ENCODE measurements at regions of chr11 and their contacts with region 1.

Region 1: DNA sequence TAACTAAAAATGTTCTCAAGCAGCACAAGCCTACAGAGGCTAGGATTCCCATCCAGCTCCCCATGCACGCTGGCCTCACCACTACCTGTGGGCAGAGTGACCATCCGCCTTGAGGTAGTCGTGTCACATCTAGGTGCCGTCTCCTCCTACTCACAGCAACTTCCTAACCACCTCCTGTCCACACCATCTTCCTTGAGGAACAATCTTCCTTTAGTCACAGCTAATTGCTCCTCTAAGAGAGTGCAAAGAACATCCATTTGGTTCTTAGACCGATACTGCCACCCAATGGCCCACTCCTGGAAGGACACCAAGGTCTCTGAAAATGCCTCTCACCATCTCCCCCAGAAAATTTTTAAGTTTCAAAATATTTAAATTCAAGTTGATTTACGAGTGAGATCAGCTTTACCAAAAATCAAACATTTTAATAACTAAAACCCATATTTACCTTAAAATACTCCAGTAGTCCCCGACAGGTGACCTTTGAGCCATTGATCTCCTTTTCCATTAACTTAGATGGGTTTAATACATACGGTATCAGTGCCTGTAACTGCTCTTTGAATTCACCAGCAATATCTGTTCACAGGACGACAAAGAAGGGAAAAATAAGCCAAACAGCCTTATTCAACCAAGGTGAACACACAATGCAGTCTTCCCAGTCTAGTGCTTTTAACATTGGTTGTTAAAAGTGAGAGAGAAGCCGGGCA is 21.7 kb upstream of the PLAAT3 start:
- DNase-seq: peak; percentile 66
- H3K4me3 Mint-ChIP-seq: no peak overlapping the region
- H3K27ac Mint-ChIP-seq: no peak overlapping the region
- H3K4me1 Mint-ChIP-seq: peaks cover 6% of the 10 kb centered on the region
- H3K27me3 Mint-ChIP-seq: no peaks in the 10 kb centered on the region
- CTCF ChIP-seq: peak; percentile 71

Region 2: GRCh38 chr11:63592975-63593395 is 42.9 kb before region 1 on chr11:
- CTCF ChIA-PET with region 1: interaction called, 4 read pairs
- POLR2A ChIA-PET with region 1: no interaction called
- intact Hi-C with region 1: loop called (anchors 1 kb)
- DNase-seq: peak; percentile 28
- H3K4me3 Mint-ChIP-seq: no peak overlapping the region
- H3K27ac Mint-ChIP-seq: no peak overlapping the region
- H3K4me1 Mint-ChIP-seq: peaks cover 4% of the 10 kb centered on the region
- H3K27me3 Mint-ChIP-seq: no peaks in the 10 kb centered on the region
- CTCF ChIP-seq: peak; percentile 52

Region 3: GRCh38 chr11:63621931-63622782 is 13.8 kb before region 1 on chr11:
- CTCF ChIA-PET with region 1: interaction called, 16 read pairs
- POLR2A ChIA-PET with region 1: interaction called, 4 read pairs
- intact Hi-C with region 1: no loop called
- DNase-seq: peak; percentile 26
- H3K4me3 Mint-ChIP-seq: no peak overlapping the region
- H3K27ac Mint-ChIP-seq: no peak overlapping the region
- H3K4me1 Mint-ChIP-seq: peaks cover 16% of the 10 kb centered on the region
- H3K27me3 Mint-ChIP-seq: no peaks in the 10 kb centered on the region
- CTCF ChIP-seq: no peak

Region 4: DNA sequence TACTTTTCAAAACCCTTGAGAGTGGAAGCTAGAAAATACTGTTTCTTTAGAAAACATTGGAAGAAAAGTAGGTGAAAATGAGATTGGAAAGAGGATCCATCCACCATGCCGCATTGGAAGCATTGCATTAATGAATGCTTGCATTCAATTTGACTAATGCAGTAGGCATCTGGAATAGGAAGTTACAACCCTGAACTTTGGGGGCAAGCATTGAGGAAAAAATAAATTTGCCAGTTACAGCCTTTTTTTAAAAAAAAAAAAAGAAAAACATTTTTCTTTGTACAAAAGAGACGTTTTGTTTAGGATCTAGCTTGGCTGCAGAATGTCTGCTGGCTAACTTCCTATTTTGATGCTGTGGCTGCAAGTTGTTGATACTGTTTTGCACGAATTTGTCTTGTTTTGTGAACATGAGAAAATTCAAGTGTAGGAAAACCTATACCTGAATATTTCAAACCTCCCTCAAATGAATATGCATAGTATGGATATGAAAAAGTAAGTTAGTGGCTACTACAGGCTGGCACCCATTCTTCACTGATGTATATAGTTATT is 73.5 kb after region 1 on chr11:
- CTCF ChIA-PET with region 1: interaction called, 11 read pairs
- POLR2A ChIA-PET with region 1: no interaction called
- intact Hi-C with region 1: no loop called
- DNase-seq: no peak
- H3K4me3 Mint-ChIP-seq: no peak overlapping the region
- H3K27ac Mint-ChIP-seq: no peak overlapping the region
- H3K4me1 Mint-ChIP-seq: peaks cover 4% of the 10 kb centered on the region
- H3K27me3 Mint-ChIP-seq: no peaks in the 10 kb centered on the region
- CTCF ChIP-seq: no peak

Region 5: DNA sequence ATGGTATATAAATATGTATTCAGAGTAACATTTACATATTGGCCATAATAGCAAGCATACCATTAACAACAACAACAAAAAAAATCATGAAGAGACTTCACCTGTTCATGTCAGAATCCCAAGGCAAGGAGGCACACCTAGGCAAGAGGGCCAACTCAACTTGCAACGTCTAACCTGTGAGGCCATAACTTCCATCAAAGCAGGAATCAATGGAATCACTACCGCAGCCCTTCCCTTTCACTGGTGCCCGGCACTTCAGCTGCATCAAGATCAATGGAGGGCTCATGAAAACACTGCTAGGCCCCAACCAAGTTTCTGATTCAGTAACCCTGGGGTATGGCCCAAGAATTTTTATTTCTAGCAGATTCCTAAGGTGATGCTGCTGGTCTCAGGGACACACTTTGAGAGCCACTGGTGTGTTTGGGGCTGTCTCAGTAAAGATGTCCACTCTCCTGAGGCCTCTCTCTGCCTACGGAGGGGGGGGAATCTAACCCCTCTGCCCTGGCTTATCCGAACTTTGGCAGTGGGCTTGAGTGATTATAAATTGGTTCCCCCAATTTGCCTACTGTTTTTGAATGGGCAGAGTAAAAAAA is 124.7 kb after region 1 on chr11:
- CTCF ChIA-PET with region 1: no interaction called
- POLR2A ChIA-PET with region 1: no interaction called
- intact Hi-C with region 1: no loop called
- DNase-seq: no peak
- H3K4me3 Mint-ChIP-seq: no peak overlapping the region
- H3K27ac Mint-ChIP-seq: no peak overlapping the region
- H3K4me1 Mint-ChIP-seq: peaks cover 4% of the 10 kb centered on the region
- H3K27me3 Mint-ChIP-seq: no peaks in the 10 kb centered on the region
- CTCF ChIP-seq: no peak

Region 6: DNA sequence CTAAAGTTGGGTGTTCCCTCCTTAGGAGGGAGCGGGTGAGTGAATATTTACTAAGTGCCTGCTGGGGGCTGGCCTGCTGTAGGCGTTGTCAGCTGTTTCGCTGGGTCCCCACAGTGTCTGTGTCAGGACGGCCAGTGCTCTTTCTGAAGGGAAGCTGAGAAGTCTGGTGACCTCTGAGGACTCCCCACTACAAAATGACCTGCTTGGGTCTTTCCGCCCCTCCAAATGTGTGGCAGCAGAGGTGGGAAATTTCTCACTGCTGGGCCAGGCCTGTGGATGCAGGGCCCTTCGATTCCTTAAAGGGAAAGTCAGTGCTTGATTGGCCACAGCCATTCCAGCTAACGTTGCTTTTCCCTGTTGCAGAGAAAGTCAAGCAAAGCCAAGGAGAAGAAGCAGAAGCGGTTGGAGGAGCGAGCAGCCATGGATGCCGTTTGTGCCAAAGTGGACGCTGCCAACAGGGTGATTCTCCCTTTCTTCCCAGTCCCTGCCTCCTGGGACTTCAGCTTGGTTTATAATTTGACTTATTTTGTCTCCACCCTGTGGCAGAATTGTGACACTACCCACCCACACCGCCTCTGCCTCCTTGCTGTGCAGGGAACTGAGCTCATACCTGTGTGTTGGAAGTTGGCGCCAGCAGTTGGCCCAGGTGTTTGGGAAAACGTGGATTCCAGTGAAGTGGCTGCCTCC is 309.7 kb after region 1 on chr11:
- CTCF ChIA-PET with region 1: no interaction called
- POLR2A ChIA-PET with region 1: no interaction called
- intact Hi-C with region 1: loop called (anchors 10 kb)
- DNase-seq: peak; percentile 75
- H3K4me3 Mint-ChIP-seq: no peak overlapping the region
- H3K27ac Mint-ChIP-seq: no peak overlapping the region
- H3K4me1 Mint-ChIP-seq: no peaks in the 10 kb centered on the region
- H3K27me3 Mint-ChIP-seq: no peaks in the 10 kb centered on the region
- CTCF ChIP-seq: peak; percentile 63